ENCODE measurements at regions of chr5 and their contacts with region 1.

Region 1: GRCh38 chr5:75049456-75050351 is 2.7 kb downstream of the GCNT4 start:
- DNase-seq: peak in 33 of 35 experiments; percentile 29 to 89 (median 58)
- ATAC-seq: peak; percentile 21 to 35 (median 28)
- H3K4me3 ChIP-seq: peak overlapping the region; percentile 1 to 8
- H3K4me3 Mint-ChIP-seq: peak overlapping the region; percentile 87 to 96 (median 94)
- H3K27ac ChIP-seq: no peak overlapping the region
- H3K27ac Mint-ChIP-seq: peak overlapping the region; percentile 91 to 98
- H3K4me1 ChIP-seq: peaks cover 30 to 52% of the 10 kb centered on the region in 2 experiments
- H3K4me1 Mint-ChIP-seq: peaks cover 76 to 85% (median 81%) of the 10 kb centered on the region in 3 donors
- H3K27me3 ChIP-seq: peaks cover 0 to 14% of the 10 kb centered on the region in 2 experiments
- H3K27me3 Mint-ChIP-seq: peaks cover 0 to 7% of the 10 kb centered on the region in 2 donors

Region 2: GRCh38 chr5:75142566-75143136 is 92.9 kb after region 1 on chr5:
- CTCF ChIA-PET with region 1: interaction called, 3 to 10 read pairs
- POLR2A ChIA-PET with region 1: no interaction called
- DNase-seq: no peak
- ATAC-seq: no peak
- H3K4me3 ChIP-seq: no peak overlapping the region
- H3K4me3 Mint-ChIP-seq: no peak overlapping the region
- H3K27ac ChIP-seq: no peak overlapping the region
- H3K27ac Mint-ChIP-seq: no peak overlapping the region
- H3K4me1 ChIP-seq: peaks cover 0 to 11% of the 10 kb centered on the region in 2 experiments
- H3K4me1 Mint-ChIP-seq: peaks cover 5 to 19% (median 15%) of the 10 kb centered on the region in 3 donors
- H3K27me3 ChIP-seq: no peaks in the 10 kb centered on the region
- H3K27me3 Mint-ChIP-seq: no peaks in the 10 kb centered on the region